Activated naive CD4-positive, alpha-beta T cell treated with anti-CD3 and anti-CD28 coated beads, Interleukin-2, amount 10 ng/mL, durations not matched to agents 7 days and 5 days (primary cell): ENCODE measurements at regions of chr14 and their contacts with region 1.

Region 1: DNA sequence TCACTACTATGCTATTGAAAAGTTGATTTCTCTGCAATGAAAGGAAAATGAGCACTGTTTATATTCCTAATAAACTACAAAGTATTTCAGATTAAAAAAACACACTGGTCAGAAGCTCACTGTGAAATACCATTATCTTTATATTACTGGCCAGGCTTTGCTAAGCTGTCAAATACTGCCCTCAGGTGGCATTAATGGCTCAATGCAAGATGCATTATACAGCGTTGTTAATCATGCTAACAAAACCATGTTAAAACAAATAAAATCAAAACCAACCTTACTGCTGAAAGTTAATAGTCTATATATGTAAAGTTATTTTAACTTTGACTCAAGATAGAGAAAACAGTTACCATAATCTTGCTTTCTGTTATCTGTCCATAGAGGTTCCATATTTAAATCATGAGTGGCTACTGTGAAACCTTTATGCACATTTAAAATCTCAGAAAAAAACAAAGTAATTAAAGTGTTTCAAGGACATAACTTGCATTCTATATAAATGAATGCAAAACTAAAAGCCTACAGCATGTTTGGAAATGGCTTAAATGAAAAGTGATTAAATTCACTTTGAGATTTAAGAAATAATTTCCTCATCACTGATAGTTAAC is 121.7 kb downstream of the RALGAPA1 start:
- DNase-seq: peak; percentile 52
- H3K4me3 Mint-ChIP-seq: no peak overlapping the region
- H3K27ac Mint-ChIP-seq: no peak overlapping the region
- H3K4me1 Mint-ChIP-seq: peaks cover 17% of the 10 kb centered on the region
- H3K27me3 Mint-ChIP-seq: no peaks in the 10 kb centered on the region

Region 2: GRCh38 chr14:35438910-35439713 is 248.3 kb before region 1 on chr14:
- CTCF ChIA-PET with region 1: interaction called, 16 read pairs
- DNase-seq: no peak
- H3K4me3 Mint-ChIP-seq: no peak overlapping the region
- H3K27ac Mint-ChIP-seq: no peak overlapping the region
- H3K4me1 Mint-ChIP-seq: peaks cover 5% of the 10 kb centered on the region
- H3K27me3 Mint-ChIP-seq: no peaks in the 10 kb centered on the region

Region 3: DNA sequence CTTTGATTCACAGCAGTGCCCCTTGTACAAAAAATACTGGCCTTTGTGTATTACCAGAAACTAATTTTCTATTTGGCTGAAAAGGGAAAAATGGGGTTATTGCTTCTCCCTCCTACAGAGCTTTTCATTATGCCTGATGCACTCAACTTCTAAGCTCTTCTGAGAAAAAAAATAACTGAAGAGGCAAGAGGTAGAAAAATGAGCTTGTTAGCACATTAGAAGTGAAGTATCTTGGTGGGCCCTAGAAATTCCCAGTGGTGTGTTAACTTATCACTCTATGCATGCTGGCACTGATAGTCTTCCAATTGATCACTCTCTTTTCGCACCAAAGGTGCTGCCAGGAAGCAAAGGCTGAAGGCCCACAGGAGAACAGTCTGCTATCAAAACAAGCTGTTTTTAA is 136.4 kb before region 1 on chr14:
- CTCF ChIA-PET with region 1: no interaction called
- DNase-seq: no peak
- H3K4me3 Mint-ChIP-seq: no peak overlapping the region
- H3K27ac Mint-ChIP-seq: no peak overlapping the region
- H3K4me1 Mint-ChIP-seq: no peaks in the 10 kb centered on the region
- H3K27me3 Mint-ChIP-seq: no peaks in the 10 kb centered on the region

Region 4: DNA sequence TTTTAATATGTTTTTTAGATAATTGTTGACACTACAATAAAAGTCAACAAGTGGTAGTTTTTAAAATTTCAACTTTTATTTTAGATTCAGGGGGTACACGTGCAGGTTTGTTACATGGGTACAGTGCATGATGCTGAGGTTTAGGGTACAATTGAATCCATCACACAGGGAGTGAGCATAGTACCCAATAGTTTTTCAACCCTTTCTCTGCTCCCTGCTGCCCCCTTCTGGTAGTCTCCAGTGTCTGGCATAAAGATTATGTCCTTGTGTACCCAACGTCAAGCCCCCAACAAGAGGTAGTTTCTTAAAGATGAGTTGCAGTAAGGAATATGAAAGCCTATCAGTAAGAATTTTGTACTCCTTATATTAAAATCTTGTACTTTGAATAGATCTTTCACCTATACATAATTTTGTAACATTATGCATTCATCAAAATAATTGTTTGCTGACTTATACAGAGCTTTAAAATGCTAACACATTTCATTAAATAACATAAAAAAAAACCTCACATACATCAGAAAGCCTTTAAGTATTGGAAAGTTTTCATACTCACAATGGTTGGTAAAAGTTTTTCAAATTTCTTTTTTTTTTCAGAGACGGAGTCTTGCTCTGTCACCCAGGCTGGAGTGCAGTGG is 127.1 kb after region 1 on chr14:
- CTCF ChIA-PET with region 1: interaction called, 11 read pairs
- DNase-seq: peak; percentile 86
- H3K4me3 Mint-ChIP-seq: no peak overlapping the region
- H3K27ac Mint-ChIP-seq: no peak overlapping the region
- H3K4me1 Mint-ChIP-seq: no peaks in the 10 kb centered on the region
- H3K27me3 Mint-ChIP-seq: peaks cover 3% of the 10 kb centered on the region